WTC11 (cell line): ENCODE measurements at regions of chr9 and their contacts with region 1.

Region 1: DNA sequence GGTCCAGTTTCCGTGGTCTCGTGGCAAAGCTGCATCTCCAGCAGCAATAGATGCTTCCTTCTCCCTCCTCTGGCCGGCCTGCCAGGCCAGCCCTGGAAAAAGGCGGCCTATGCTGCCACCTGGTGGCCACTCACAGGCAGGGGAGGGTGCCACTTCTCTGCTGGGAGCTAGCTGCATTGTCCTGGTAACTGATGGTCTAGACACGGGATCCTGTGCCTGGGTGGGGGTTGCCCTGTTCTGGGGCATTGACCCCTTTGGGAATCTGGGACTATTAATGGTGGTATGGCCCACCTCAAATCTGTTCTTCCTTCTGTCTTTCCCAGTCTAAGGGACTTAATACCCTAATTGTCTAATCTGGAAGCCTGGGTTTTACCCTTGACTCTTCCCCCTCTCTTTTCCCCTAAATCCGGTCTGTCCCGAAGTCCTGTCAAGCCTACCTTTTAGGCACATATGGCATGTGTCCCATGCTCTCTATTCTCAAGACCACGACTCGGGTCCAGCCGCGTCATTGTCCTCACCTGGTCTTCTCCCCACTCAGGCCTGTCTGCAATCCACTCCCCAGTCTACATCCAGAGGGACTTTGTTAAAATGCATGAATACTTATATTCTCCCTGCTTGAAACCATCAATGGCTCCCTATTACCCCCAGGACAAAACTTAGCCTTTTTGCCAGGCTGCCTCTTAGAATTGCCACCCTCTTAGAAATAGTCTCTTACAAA is 20.0 kb upstream of the PTGS1 start:
- DNase-seq: peak; percentile 90
- ATAC-seq: peak; percentile 77
- H3K4me3 Mint-ChIP-seq: no peak overlapping the region
- H3K27ac Mint-ChIP-seq: no peak overlapping the region
- H3K4me1 Mint-ChIP-seq: peaks cover 20% of the 10 kb centered on the region
- H3K27me3 Mint-ChIP-seq: peaks cover 34% of the 10 kb centered on the region
- CTCF ChIP-seq: peak; percentile 86

Region 2: DNA sequence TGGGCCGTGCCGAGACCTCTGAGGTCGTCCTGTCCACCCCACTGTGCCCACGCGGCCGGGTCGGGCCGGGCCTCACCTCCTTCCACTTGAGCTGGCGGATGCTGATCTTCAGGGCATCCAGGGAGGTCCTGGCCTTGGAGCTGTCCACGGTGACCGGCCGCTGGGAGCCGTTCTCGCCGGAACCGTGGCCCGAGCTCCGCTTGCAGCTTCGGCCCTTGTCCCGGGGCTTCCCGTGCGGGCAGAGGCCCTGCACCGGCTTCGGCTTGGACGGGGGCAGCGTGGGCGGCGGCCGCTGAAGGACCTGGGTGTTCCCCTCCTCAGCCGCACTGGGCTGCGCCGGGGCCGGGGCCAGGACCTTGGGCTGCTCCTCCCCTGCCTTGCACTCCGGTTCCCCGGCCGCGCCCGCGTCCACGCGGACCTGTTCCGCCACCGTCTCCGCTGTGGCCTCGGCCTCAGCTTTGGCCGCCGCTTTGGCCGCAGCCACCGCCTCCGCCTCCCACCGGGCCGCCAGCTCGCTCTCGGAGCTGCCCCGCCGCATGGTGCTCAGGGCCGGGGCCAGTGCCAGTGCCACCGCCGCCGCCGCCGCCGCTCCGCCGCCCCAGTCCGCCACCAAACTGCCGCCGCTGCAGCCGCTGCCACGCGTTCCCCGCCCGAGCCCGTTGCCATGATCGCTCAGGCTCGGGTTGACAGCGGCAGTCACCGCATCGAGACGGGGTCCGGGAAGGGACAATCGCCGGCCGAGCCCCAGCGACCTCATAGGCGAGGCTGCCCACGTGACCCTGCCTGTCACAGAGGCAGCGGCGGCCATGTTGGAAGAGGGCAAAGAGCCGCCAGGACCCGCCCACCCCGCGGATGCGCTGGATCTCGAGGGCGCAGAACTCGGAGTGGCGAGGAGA is 257.9 kb before region 1 on chr9 and contains the start of gene TTLL11:
- CTCF ChIA-PET with region 1: interaction called, 91 read pairs
- POLR2A ChIA-PET with region 1: no interaction called
- DNase-seq: peak; percentile 92
- ATAC-seq: peak; percentile 82
- H3K4me3 Mint-ChIP-seq: peak within 1 kb of the TSS; percentile 82
- H3K27ac Mint-ChIP-seq: no peak within 1 kb of the TSS
- H3K4me1 Mint-ChIP-seq: peaks cover 12% of the 10 kb centered on the region
- H3K27me3 Mint-ChIP-seq: peaks cover 45% of the 10 kb centered on the region
- CTCF ChIP-seq: no peak
- total RNA-seq, gene TTLL11: 0.50 to 1.1 TPM (median 0.69 TPM) in 3 replicates

Region 3: GRCh38 chr9:122116040-122116439 is 234.8 kb before region 1 on chr9:
- CTCF ChIA-PET with region 1: interaction called, 366 read pairs
- POLR2A ChIA-PET with region 1: no interaction called
- DNase-seq: no peak
- ATAC-seq: peak; percentile 81
- H3K4me3 Mint-ChIP-seq: no peak overlapping the region
- H3K27ac Mint-ChIP-seq: no peak overlapping the region
- H3K4me1 Mint-ChIP-seq: peaks cover 39% of the 10 kb centered on the region
- H3K27me3 Mint-ChIP-seq: no peaks in the 10 kb centered on the region; the same call in none of the 2 replicates
- CTCF ChIP-seq: no peak

Region 4: GRCh38 chr9:122190609-122191381 is 160.0 kb before region 1 on chr9:
- CTCF ChIA-PET with region 1: interaction called, 13 read pairs
- POLR2A ChIA-PET with region 1: no interaction called
- DNase-seq: no peak
- ATAC-seq: no peak
- H3K4me3 Mint-ChIP-seq: no peak overlapping the region
- H3K27ac Mint-ChIP-seq: no peak overlapping the region
- H3K4me1 Mint-ChIP-seq: peaks cover 16% of the 10 kb centered on the region
- H3K27me3 Mint-ChIP-seq: no peaks in the 10 kb centered on the region
- CTCF ChIP-seq: no peak

Region 5: DNA sequence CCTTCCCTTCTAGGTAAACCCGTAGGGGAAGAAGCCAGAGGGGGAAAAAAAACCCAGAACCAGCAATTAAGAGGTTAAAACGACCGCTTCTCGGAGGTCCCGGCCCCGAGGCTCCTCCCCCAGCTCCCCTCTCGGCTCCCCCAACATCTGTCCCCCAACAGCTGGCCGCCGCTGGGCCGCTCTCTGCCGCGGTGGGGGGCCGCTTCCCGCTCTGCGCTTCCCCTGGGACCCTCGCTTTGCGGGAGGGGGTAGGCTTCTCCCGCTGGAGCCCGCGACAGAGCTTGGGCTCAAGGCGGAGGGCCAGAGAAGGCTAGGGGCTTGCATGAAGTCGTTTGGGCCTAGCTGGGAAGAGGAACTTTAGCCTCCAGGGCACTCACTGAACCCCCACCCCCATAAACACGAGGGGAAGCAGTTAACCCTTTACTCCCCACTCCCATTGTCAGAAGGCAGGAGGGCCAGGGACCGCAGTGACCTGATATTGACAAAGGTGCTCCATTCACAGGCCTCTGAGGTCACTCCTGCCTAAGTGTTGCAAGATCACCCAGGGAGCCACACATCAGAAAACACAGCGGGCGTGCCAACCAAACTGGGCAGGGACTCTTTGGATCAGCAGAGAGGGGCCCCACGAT is 129.5 kb before region 1 on chr9:
- CTCF ChIA-PET with region 1: interaction called, 10 read pairs
- POLR2A ChIA-PET with region 1: no interaction called
- DNase-seq: peak; percentile 64
- ATAC-seq: peak; percentile 11
- H3K4me3 Mint-ChIP-seq: peak overlapping the region; percentile 64
- H3K27ac Mint-ChIP-seq: no peak overlapping the region
- H3K4me1 Mint-ChIP-seq: peaks cover 60% of the 10 kb centered on the region
- H3K27me3 Mint-ChIP-seq: peaks cover 100% of the 10 kb centered on the region
- CTCF ChIP-seq: no peak

Region 6: DNA sequence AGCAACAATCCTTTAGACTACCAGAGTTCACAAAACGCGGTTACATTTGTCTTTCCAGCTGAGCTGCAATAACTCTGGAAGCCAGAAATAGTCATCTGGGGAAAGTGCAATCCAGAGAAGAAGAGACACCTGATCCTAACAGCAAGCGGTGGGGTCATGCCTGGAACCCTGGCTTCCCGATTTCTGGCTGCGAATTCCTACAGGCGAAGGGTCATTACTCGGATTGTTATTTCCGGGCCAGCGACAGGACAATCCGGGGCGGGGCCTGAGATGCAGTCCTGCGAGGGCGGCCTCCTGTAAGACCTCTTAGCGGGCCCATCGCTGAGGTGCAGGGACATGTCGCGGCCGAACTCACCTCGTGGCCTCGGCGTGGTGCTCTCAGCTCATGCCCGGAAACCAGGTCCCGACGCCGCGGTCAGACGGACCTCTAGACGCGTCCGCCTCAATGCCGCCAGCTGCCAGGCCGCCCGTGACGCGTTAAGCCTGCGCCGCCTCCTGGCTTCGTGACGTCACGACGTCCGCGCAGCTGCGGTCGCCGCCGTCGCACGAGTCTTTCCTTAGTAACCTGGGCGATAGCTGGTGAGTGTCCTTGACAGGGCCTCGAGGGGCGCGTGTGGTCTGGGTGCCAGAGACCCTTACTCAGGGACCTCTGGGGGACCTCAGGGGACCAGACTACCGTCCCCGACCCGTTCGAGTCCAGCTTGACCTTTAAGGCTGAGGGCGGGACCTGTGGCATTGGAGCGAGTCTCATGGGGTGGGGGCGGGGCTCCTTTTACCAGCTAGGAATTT is 86.2 kb before region 1 on chr9 and contains the starts of genes MRRF and RBM18:
- CTCF ChIA-PET with region 1: interaction called, 15 read pairs
- POLR2A ChIA-PET with region 1: no interaction called
- DNase-seq: peak; percentile 93
- ATAC-seq: peak; percentile 84
- H3K4me3 Mint-ChIP-seq: peak within 1 kb of the TSS; percentile 95
- H3K27ac Mint-ChIP-seq: peak within 1 kb of the TSS; percentile 99
- H3K4me1 Mint-ChIP-seq: peaks cover 20% of the 10 kb centered on the region
- H3K27me3 Mint-ChIP-seq: no peaks in the 10 kb centered on the region
- CTCF ChIP-seq: no peak
- total RNA-seq, gene MRRF: 36.1 to 42.3 TPM (median 38.8 TPM) in 3 replicates
- total RNA-seq, gene RBM18: 11.4 to 14.3 TPM (median 13.1 TPM) in 3 replicates

Region 7: DNA sequence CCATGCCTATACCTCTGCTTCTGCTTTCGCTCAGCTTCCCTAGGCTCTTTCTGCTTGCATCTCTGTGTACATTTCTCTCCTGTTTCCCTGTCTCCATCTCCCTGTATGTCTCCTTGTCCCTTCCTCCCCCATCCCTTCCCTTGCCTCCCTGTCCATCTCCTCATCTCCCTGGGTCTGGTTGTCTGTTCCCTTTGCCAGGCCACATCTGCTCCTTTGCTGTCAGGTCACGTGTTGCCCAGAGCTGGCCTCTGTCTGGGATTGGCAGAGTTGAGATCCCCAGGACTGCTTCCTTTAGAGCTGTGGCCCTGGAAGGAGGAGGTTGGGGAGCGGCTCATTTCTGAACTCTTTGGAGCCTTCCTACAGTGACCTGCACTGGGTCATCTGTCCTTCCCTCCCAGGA is 11.8 kb before region 1 on chr9:
- CTCF ChIA-PET with region 1: interaction called, 39 read pairs
- POLR2A ChIA-PET with region 1: interaction called, 7 read pairs
- DNase-seq: no peak
- ATAC-seq: no peak
- H3K4me3 Mint-ChIP-seq: no peak overlapping the region
- H3K27ac Mint-ChIP-seq: no peak overlapping the region
- H3K4me1 Mint-ChIP-seq: peaks cover 60% of the 10 kb centered on the region
- H3K27me3 Mint-ChIP-seq: peaks cover 8% of the 10 kb centered on the region
- CTCF ChIP-seq: no peak